Dorsolateral prefrontal cortex (tissue), 120 donors: ENCODE measurements at regions of chr15 and their contacts with region 1.

Region 1: DNA sequence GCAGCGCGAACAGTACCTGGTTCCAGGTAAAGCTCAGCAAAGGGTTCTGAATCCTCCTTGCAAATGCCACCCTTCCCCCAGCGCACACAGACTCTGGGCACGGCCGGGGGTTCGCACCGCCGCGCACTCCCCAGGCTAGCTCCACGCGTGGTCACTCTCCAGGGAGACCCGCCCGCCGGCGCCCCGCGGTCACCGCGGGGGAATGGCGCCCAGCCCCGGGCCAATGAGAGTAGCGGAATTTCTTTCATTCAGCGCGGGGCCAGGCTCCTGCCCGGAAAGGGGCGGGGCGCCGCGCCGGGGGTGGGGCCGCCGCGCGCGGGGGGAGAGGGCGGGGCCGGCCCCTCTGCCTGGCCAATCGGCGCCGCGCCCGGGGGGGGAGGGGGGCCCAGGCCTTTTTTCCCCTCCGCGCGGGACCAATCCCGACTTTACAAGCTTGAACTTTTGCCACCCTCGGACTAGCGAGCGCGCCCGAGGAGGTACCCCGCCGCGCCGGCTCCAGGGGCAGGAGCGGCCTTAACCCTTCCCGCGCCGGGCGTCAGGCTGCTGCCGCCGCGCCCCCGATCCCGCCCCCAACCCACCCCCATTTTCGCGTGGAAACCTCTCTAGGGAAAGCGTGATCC is 1.1 kb upstream of the SMAD6 start:
- DNase-seq: peak; percentile 31 to 83 (median 74)
- H3K4me3 ChIP-seq: peak overlapping the region; percentile 41 to 78 (median 62)
- H3K27ac ChIP-seq: peak overlapping the region in 47 of 59 donors; percentile 28 to 84 (median 61)
- H3K27me3 ChIP-seq: peaks cover 0 to 30% (median 10%) of the 10 kb centered on the region in 45 donors
- CTCF ChIP-seq: peak in 3 of 56 donors; percentile 5 to 25 (median 18)

Region 2: GRCh38 chr15:66611257-66612053 is 89.5 kb before region 1 on chr15:
- intact Hi-C with region 1: loop called (anchors 5 kb)
- DNase-seq: peak in 2 of 10 donors; percentile 17 to 21
- H3K4me3 ChIP-seq: no peak overlapping the region
- H3K27ac ChIP-seq: peak overlapping the region in 4 of 59 donors; percentile 6 to 27 (median 23)
- H3K27me3 ChIP-seq: no peaks in the 10 kb centered on the region
- CTCF ChIP-seq: no peak

Region 3: GRCh38 chr15:66619151-66619903 is 81.6 kb before region 1 on chr15:
- intact Hi-C with region 1: loop called (anchors 5 kb)
- DNase-seq: peak; percentile 34 to 73 (median 58)
- H3K4me3 ChIP-seq: no peak overlapping the region
- H3K27ac ChIP-seq: peak overlapping the region in 35 of 59 donors; percentile 3 to 88 (median 55)
- H3K27me3 ChIP-seq: peaks cover 0 to 34% (median 12%) of the 10 kb centered on the region in 45 donors
- CTCF ChIP-seq: peak; percentile 52 to 88 (median 81)

Region 4: DNA sequence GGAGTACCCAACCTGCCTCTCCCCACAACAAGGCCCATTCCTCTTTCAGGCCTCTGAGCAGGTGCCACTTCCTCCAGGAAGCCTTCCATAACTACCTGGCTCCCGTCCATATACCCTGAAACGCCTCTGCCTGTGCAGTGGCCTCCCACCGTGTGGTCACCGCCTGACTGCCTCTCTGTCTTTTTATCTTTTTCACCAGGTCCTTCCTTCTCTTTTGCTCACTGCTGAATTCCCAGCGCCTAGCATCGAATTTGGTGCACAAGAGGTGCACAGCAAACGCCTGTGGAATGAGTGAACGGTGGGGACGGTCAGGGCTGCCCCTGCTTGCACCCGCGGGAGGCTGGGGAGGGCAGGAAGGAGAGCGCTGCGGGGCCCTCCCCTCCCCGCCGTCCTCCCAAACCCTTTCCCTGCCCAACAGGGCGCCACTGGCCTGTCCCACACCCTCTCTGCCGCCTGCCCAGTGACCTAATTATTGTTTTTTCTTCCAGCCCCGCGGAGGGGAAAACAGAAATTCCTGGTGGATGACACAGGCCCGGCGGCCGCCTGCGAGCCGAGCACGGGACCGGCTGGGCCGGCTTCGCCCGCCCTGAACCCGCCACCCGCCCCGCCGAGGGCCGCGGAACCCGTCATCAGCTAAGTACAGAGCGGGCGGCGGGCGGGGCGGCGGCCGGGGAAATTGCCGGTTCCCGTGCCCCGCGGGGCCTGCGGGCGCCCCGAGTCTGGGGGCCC is 141.2 kb after region 1 on chr15:
- intact Hi-C with region 1: loop called (anchors 5 to 10 kb)
- DNase-seq: peak in 6 of 10 donors; percentile 15 to 54 (median 44)
- H3K4me3 ChIP-seq: peak overlapping the region in 58 of 59 donors; percentile 8 to 68 (median 49)
- H3K27ac ChIP-seq: peak overlapping the region in 37 of 59 donors; percentile 0 to 84 (median 57)
- H3K27me3 ChIP-seq: no peaks in the 10 kb centered on the region
- CTCF ChIP-seq: no peak